PC-3 (cell line): ENCODE measurements at regions of chr5 and their contacts with region 1.

Region 1: GRCh38 chr5:178182158-178182876 is 4.9 kb downstream of the GMCL2 start:
- DNase-seq: peak; percentile 62
- ATAC-seq: peak; percentile 60
- H3K4me3 ChIP-seq: no peak overlapping the region
- H3K27ac ChIP-seq: no peak overlapping the region
- H3K4me1 ChIP-seq: peaks cover 23% of the 10 kb centered on the region
- H3K27me3 ChIP-seq: no peaks in the 10 kb centered on the region
- CTCF ChIP-seq: no peak

Region 2: GRCh38 chr5:177133091-177133852 is 1049.0 kb before region 1 on chr5 and contains the start of gene NSD1:
- CTCF ChIA-PET with region 1: no interaction called
- POLR2A ChIA-PET with region 1: interaction called, 11 read pairs
- intact Hi-C with region 1: no loop called
- DNase-seq: peak; percentile 75
- ATAC-seq: peak; percentile 60
- H3K4me3 ChIP-seq: peak within 1 kb of the TSS; percentile 79
- H3K27ac ChIP-seq: peak within 1 kb of the TSS; percentile 35
- H3K4me1 ChIP-seq: peaks cover 31% of the 10 kb centered on the region
- H3K27me3 ChIP-seq: no peaks in the 10 kb centered on the region
- CTCF ChIP-seq: no peak
- total RNA-seq, gene NSD1: 48.9 and 70.5 TPM in 2 replicates

Region 3: DNA sequence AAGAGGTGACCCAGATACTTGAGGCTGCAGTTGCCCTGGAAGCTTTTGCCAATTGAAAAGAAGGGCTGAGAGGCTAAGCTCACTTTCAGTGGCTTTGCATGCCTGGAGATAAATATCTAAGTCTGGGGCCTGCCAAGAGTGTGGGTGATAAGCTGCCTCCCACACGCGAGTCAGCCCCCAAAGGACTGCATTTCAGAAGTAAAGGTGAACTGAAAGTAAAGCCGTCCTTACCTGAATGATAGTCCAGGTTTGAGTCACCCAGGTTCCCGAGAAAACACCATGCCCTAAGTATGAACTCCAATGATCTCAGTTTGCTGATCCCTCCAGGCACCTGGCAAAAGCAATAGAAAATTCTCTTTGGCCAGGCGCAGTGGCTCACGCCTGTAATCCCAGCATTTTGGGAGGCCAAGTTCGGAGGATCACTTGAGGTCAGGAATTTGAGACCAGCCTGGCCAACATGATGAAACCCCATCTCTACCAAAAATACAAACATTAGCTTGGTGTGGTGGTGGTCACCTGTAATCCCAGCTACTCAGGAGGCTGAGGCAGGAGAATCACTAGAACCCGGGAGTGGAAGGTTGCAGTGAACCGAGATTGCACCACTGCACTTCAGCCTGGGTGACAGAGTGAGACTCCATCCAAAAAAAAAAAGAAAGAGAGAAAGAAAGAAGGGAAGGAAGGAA is 91.3 kb before region 1 on chr5:
- CTCF ChIA-PET with region 1: no interaction called
- POLR2A ChIA-PET with region 1: interaction called, 11 read pairs
- intact Hi-C with region 1: no loop called
- DNase-seq: peak; percentile 67
- ATAC-seq: no peak
- H3K4me3 ChIP-seq: no peak overlapping the region
- H3K27ac ChIP-seq: no peak overlapping the region
- H3K4me1 ChIP-seq: peaks cover 5% of the 10 kb centered on the region; the same call in 1 of the 2 replicates
- H3K27me3 ChIP-seq: no peaks in the 10 kb centered on the region
- CTCF ChIP-seq: no peak

Region 4: GRCh38 chr5:178204182-178204894 is 22.0 kb after region 1 on chr5 and contains the start of gene HNRNPAB:
- CTCF ChIA-PET with region 1: no interaction called
- POLR2A ChIA-PET with region 1: interaction called, 11 read pairs
- intact Hi-C with region 1: no loop called
- DNase-seq: peak; percentile 96
- ATAC-seq: peak; percentile 74
- H3K4me3 ChIP-seq: peak within 1 kb of the TSS; percentile 92
- H3K27ac ChIP-seq: peak within 1 kb of the TSS; percentile 21; the same call in 1 of the 2 replicates
- H3K4me1 ChIP-seq: peaks cover 31% of the 10 kb centered on the region
- H3K27me3 ChIP-seq: no peaks in the 10 kb centered on the region
- CTCF ChIP-seq: no peak
- total RNA-seq, gene HNRNPAB: 231 and 369 TPM in 2 replicates